ENCODE measurements at regions of chr16 and their contacts with region 1.

Region 1: GRCh38 chr16:58198022-58198683 is at the start of gene CSNK2A2:
- DNase-seq: peak; percentile 25 to 52
- ATAC-seq: peak; percentile 91 to 92
- H3K4me3 ChIP-seq: peak within 1 kb of the TSS; percentile 67 to 85 (median 78)
- H3K27ac ChIP-seq: peak within 1 kb of the TSS in 3 of 4 donors; percentile 59 to 65 (median 61)
- H3K4me1 ChIP-seq: peaks cover 9% of the 10 kb centered on the region in 2 donors
- H3K27me3 ChIP-seq: no peaks in the 10 kb centered on the region
- CTCF ChIP-seq: peak in 4 of 5 experiments; percentile 30 to 56 (median 42)
- POLR2A ChIP-seq: peak; percentile 27 to 33
- total RNA-seq, gene CSNK2A2: 14.0 to 29.5 (median 20.4) TPM

Region 2: GRCh38 chr16:57871456-57871855 is 326.7 kb before region 1 on chr16:
- in situ Hi-C with region 1: no loop called
- intact Hi-C with region 1: no loop called
- DNase-seq: no peak
- ATAC-seq: no peak
- H3K4me3 ChIP-seq: no peak overlapping the region
- H3K27ac ChIP-seq: no peak overlapping the region
- H3K4me1 ChIP-seq: no peaks in the 10 kb centered on the region
- H3K27me3 ChIP-seq: peaks cover 0 to 7% (median 4%) of the 10 kb centered on the region in 3 donors
- CTCF ChIP-seq: no peak
- POLR2A ChIP-seq: no peak

Region 3: GRCh38 chr16:57916735-57917451 is 281.3 kb before region 1 on chr16:
- in situ Hi-C with region 1: no loop called
- intact Hi-C with region 1: no loop called
- DNase-seq: no peak
- ATAC-seq: no peak
- H3K4me3 ChIP-seq: no peak overlapping the region
- H3K27ac ChIP-seq: no peak overlapping the region
- H3K4me1 ChIP-seq: no peaks in the 10 kb centered on the region
- H3K27me3 ChIP-seq: no peaks in the 10 kb centered on the region
- CTCF ChIP-seq: no peak
- POLR2A ChIP-seq: no peak

Region 4: DNA sequence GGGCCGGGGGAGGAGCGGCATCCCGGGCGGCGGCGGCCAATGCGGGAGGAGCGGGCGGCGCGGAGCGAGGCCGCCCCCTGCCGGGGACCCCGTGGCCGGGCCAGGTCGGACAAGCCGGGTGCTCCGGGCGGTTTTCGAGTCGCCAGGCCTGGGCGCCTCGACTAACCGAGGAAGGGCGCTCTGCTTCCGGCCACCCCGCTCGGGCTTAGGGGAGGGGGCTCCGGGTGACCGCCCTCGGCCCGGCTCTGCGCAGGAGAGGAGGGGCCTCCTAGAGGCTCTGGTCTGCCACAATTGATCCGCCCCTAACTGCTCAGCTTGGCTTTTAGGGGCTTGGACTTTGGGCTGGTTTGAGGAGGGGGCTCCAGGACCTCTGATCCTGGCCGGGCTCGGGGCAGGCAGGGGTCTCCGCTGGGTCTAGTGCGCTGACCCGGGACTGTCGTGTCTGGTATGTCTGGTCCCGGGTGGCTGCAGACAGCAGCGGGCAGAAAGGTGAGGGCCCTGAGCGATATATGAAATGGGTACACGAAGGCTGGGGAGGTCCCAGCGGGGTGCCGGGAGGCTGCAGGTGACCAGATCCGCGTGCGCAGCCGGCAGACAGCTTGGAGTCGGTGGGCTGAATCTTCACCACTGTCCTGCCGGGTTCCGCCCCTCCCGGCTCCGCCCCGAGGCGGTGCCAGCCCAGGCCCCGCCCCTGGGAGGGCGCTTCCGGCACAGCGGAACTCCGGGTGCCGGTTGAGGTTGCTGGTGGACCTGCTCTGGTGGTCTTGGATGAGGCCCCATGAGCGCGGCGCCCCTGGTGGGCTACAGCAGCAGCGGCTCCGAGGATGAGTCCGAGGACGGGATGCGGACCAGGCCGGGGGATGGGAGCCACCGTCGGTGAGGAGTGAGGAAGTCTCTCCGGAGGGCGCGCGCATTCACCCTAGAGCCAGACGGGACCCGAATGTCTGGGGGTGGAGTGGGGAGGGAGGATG is 197.2 kb before region 1 on chr16 and contains the start of gene USB1:
- in situ Hi-C with region 1: no loop called
- intact Hi-C with region 1: no loop called
- DNase-seq: peak; percentile 76 to 79
- ATAC-seq: peak; percentile 86 to 90
- H3K4me3 ChIP-seq: peak within 1 kb of the TSS; percentile 69 to 88 (median 78)
- H3K27ac ChIP-seq: peak within 1 kb of the TSS; percentile 97 to 99 (median 98)
- H3K4me1 ChIP-seq: peaks cover 19 to 21% of the 10 kb centered on the region in 2 donors
- H3K27me3 ChIP-seq: no peaks in the 10 kb centered on the region
- CTCF ChIP-seq: peak; percentile 57 to 94 (median 69)
- POLR2A ChIP-seq: peak; percentile 76 to 82
- total RNA-seq, gene USB1: 5.7 to 31.2 (median 15.9) TPM

Region 5: GRCh38 chr16:58129097-58129936 is 68.8 kb before region 1 on chr16 and contains the start of gene CFAP20:
- in situ Hi-C with region 1: no loop called
- intact Hi-C with region 1: loop called (anchors 5 kb)
- DNase-seq: peak; percentile 99
- ATAC-seq: peak; percentile 99 to 100
- H3K4me3 ChIP-seq: peak within 1 kb of the TSS; percentile 84 to 92 (median 88)
- H3K27ac ChIP-seq: peak within 1 kb of the TSS; percentile 86 to 91 (median 90)
- H3K4me1 ChIP-seq: peaks cover 25 to 31% of the 10 kb centered on the region in 2 donors
- H3K27me3 ChIP-seq: no peaks in the 10 kb centered on the region
- CTCF ChIP-seq: peak in 2 of 5 experiments; percentile 15 to 16
- POLR2A ChIP-seq: peak; percentile 83 to 96
- total RNA-seq, gene CFAP20: 6.5 to 16.0 (median 9.1) TPM

Region 6: GRCh38 chr16:58187665-58188421 is 10.3 kb before region 1 on chr16:
- in situ Hi-C with region 1: no loop called
- intact Hi-C with region 1: loop called (anchors 1 kb)
- DNase-seq: peak; percentile 2 to 70
- ATAC-seq: peak; percentile 33 to 92
- H3K4me3 ChIP-seq: no peak overlapping the region
- H3K27ac ChIP-seq: peak overlapping the region; percentile 64 to 75 (median 74)
- H3K4me1 ChIP-seq: peaks cover 20 to 28% of the 10 kb centered on the region in 2 donors
- H3K27me3 ChIP-seq: no peaks in the 10 kb centered on the region
- CTCF ChIP-seq: no peak
- POLR2A ChIP-seq: no peak

Region 7: GRCh38 chr16:58733671-58734458 is 535.7 kb after region 1 on chr16 and contains the start of gene GOT2:
- in situ Hi-C with region 1: no loop called
- intact Hi-C with region 1: no loop called
- DNase-seq: peak; percentile 68 to 82
- ATAC-seq: peak; percentile 87 to 88
- H3K4me3 ChIP-seq: peak within 1 kb of the TSS; percentile 79 to 96 (median 90)
- H3K27ac ChIP-seq: peak within 1 kb of the TSS; percentile 85 to 93 (median 92)
- H3K4me1 ChIP-seq: peaks cover 39 to 43% of the 10 kb centered on the region in 2 donors
- H3K27me3 ChIP-seq: no peaks in the 10 kb centered on the region
- CTCF ChIP-seq: peak; percentile 69 to 93 (median 84)
- POLR2A ChIP-seq: peak; percentile 40 to 56
- total RNA-seq, gene GOT2: 135 to 253 (median 195) TPM

Measured in gastrocnemius medialis (tissue), 4 donors.